Naive thymus-derived CD4-positive, alpha-beta T cell (primary cell): ENCODE measurements at regions of chr5 and their contacts with region 1.

Region 1: DNA sequence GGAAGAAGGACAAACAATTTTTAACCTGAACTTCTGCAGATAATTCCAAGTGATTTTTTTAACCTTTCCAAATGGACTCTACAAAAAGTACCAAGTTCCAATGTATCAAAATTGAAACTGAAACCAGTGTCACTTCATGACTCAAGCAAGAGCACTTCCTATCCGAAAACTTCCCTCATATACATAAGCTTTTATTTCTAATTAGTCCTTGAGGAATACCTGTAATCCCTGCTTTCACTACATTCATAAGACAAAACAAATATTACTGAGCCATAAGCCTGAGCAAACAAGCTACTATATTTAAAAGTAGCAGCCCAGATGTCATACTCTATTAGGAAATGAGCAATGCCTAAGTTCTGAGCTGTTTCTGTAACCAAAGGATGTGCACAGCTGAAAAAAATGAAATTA is 224.4 kb downstream of the EBF1 start:
- DNase-seq: peak in 5 of 9 donors; percentile 0 to 37 (median 20)
- ATAC-seq: peak; percentile 44
- H3K4me3 ChIP-seq: peak overlapping the region; percentile 18
- H3K4me3 Mint-ChIP-seq: peak overlapping the region; percentile 67 to 89 (median 82)
- H3K27ac ChIP-seq: no peak overlapping the region
- H3K27ac Mint-ChIP-seq: peak overlapping the region; percentile 82 to 94 (median 89)
- H3K4me1 ChIP-seq: no peaks in the 10 kb centered on the region
- H3K4me1 Mint-ChIP-seq: peaks cover 8 to 33% (median 28%) of the 10 kb centered on the region in 7 donors
- H3K27me3 ChIP-seq: no peaks in the 10 kb centered on the region
- H3K27me3 Mint-ChIP-seq: peaks cover 0 to 9% (median 4%) of the 10 kb centered on the region in 5 donors

Region 2: GRCh38 chr5:158739951-158740757 is 135.1 kb before region 1 on chr5:
- CTCF ChIA-PET with region 1: no interaction called
- POLR2A ChIA-PET with region 1: no interaction called
- intact Hi-C with region 1: loop called in 1 of 2 experiments (anchors 5 kb)
- DNase-seq: no peak
- ATAC-seq: no peak
- H3K4me3 ChIP-seq: no peak overlapping the region
- H3K4me3 Mint-ChIP-seq: no peak overlapping the region
- H3K27ac ChIP-seq: no peak overlapping the region
- H3K27ac Mint-ChIP-seq: no peak overlapping the region
- H3K4me1 ChIP-seq: no peaks in the 10 kb centered on the region
- H3K4me1 Mint-ChIP-seq: no peaks in the 10 kb centered on the region
- H3K27me3 ChIP-seq: peaks cover 0 to 3% of the 10 kb centered on the region in 2 donors
- H3K27me3 Mint-ChIP-seq: peaks cover 0 to 7% (median 0%) of the 10 kb centered on the region in 5 donors

Region 3: GRCh38 chr5:158819840-158820620 is 55.2 kb before region 1 on chr5:
- CTCF ChIA-PET with region 1: no interaction called
- POLR2A ChIA-PET with region 1: no interaction called
- intact Hi-C with region 1: loop called in 1 of 2 experiments (anchors 5 kb)
- DNase-seq: peak in 1 of 9 donors; percentile 21
- ATAC-seq: no peak
- H3K4me3 ChIP-seq: no peak overlapping the region
- H3K4me3 Mint-ChIP-seq: peak overlapping the region in 3 of 10 donors; percentile 1 to 43 (median 3)
- H3K27ac ChIP-seq: no peak overlapping the region
- H3K27ac Mint-ChIP-seq: peak overlapping the region in 2 of 9 donors; percentile 0 to 54
- H3K4me1 ChIP-seq: peaks cover 0 to 4% of the 10 kb centered on the region in 2 donors
- H3K4me1 Mint-ChIP-seq: peaks cover 8 to 46% (median 29%) of the 10 kb centered on the region in 7 donors
- H3K27me3 ChIP-seq: no peaks in the 10 kb centered on the region
- H3K27me3 Mint-ChIP-seq: no peaks in the 10 kb centered on the region

Region 4: GRCh38 chr5:158953929-158954534 is 78.8 kb after region 1 on chr5:
- CTCF ChIA-PET with region 1: no interaction called
- POLR2A ChIA-PET with region 1: no interaction called
- intact Hi-C with region 1: no loop called
- DNase-seq: no peak
- ATAC-seq: peak; percentile 48
- H3K4me3 ChIP-seq: no peak overlapping the region
- H3K4me3 Mint-ChIP-seq: no peak overlapping the region
- H3K27ac ChIP-seq: no peak overlapping the region
- H3K27ac Mint-ChIP-seq: no peak overlapping the region
- H3K4me1 ChIP-seq: peaks cover 0 to 13% of the 10 kb centered on the region in 2 donors
- H3K4me1 Mint-ChIP-seq: peaks cover 7 to 21% (median 19%) of the 10 kb centered on the region in 7 donors
- H3K27me3 ChIP-seq: no peaks in the 10 kb centered on the region
- H3K27me3 Mint-ChIP-seq: peaks cover 0 to 2% (median 0%) of the 10 kb centered on the region in 5 donors